ENCODE measurements at regions of chr17 and their contacts with region 1.

Region 1: GRCh38 chr17:79997011-79997660 is 38.5 kb downstream of the TBC1D16 start:
- DNase-seq: peak; percentile 59 to 97 (median 77)
- ATAC-seq: peak; percentile 94
- H3K4me3 ChIP-seq: peak overlapping the region; percentile 35 to 42
- H3K4me3 Mint-ChIP-seq: peak overlapping the region; percentile 75
- H3K27ac ChIP-seq: peak overlapping the region; percentile 63 to 88
- H3K27ac Mint-ChIP-seq: peak overlapping the region; percentile 94
- H3K4me1 ChIP-seq: peaks cover 50% of the 10 kb centered on the region
- H3K4me1 Mint-ChIP-seq: peaks cover 50% of the 10 kb centered on the region
- H3K27me3 ChIP-seq: peaks cover 0 to 6% of the 10 kb centered on the region in 2 experiments
- H3K27me3 Mint-ChIP-seq: no peaks in the 10 kb centered on the region
- CTCF ChIP-seq: no peak

Region 2: DNA sequence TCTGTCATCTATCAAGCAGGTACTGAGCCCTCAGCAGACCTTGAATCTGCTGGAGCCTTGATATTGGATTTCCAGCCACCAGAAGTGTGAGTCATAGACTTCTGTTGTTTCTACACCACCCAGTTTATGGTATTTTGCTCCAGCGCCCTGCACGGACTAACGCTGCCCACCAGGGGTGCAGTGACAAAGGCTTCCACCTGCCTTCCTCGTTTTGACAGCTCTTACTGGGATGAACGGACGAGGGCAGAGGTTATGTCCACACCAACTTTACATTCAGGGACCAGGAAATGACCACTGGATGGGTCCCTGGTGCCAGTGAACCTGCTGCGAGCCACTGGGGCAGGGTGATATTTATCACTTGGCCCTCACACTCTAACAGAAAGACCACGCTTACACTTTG is 91.3 kb before region 1 on chr17:
- CTCF ChIA-PET with region 1: no interaction called
- POLR2A ChIA-PET with region 1: no interaction called
- intact Hi-C with region 1: no loop called
- DNase-seq: no peak
- ATAC-seq: no peak
- H3K4me3 ChIP-seq: no peak overlapping the region
- H3K4me3 Mint-ChIP-seq: no peak overlapping the region
- H3K27ac ChIP-seq: no peak overlapping the region
- H3K27ac Mint-ChIP-seq: no peak overlapping the region
- H3K4me1 ChIP-seq: no peaks in the 10 kb centered on the region
- H3K4me1 Mint-ChIP-seq: no peaks in the 10 kb centered on the region
- H3K27me3 ChIP-seq: no peaks in the 10 kb centered on the region
- H3K27me3 Mint-ChIP-seq: peaks cover 13% of the 10 kb centered on the region
- CTCF ChIP-seq: no peak

Region 3: GRCh38 chr17:80035943-80036714 is 39.0 kb after region 1 on chr17 and contains the start of gene CCDC40:
- CTCF ChIA-PET with region 1: no interaction called
- POLR2A ChIA-PET with region 1: no interaction called
- intact Hi-C with region 1: loop called (anchors 1 to 5 kb)
- DNase-seq: peak; percentile 66 to 93 (median 79)
- ATAC-seq: peak; percentile 79
- H3K4me3 ChIP-seq: peak within 1 kb of the TSS; percentile 64 to 86
- H3K4me3 Mint-ChIP-seq: peak within 1 kb of the TSS; percentile 89
- H3K27ac ChIP-seq: peak within 1 kb of the TSS; percentile 75 to 80
- H3K27ac Mint-ChIP-seq: peak within 1 kb of the TSS; percentile 49
- H3K4me1 ChIP-seq: peaks cover 12% of the 10 kb centered on the region
- H3K4me1 Mint-ChIP-seq: peaks cover 13% of the 10 kb centered on the region
- H3K27me3 ChIP-seq: peaks cover 0 to 6% of the 10 kb centered on the region in 2 experiments
- H3K27me3 Mint-ChIP-seq: peaks cover 10% of the 10 kb centered on the region
- CTCF ChIP-seq: peak; percentile 25
- total RNA-seq, gene CCDC40: 1.0 to 1.2 TPM

Measured in CD8-positive, alpha-beta T cell (primary cell).